ENCODE measurements at regions of chr17 and their contacts with region 1.

Region 1: GRCh38 chr17:38982858-38983746 is 15.9 kb upstream of the FBXO47 start:
- DNase-seq: no peak
- H3K4me3 ChIP-seq: no peak overlapping the region
- CTCF ChIP-seq: peak; percentile 64

Region 2: DNA sequence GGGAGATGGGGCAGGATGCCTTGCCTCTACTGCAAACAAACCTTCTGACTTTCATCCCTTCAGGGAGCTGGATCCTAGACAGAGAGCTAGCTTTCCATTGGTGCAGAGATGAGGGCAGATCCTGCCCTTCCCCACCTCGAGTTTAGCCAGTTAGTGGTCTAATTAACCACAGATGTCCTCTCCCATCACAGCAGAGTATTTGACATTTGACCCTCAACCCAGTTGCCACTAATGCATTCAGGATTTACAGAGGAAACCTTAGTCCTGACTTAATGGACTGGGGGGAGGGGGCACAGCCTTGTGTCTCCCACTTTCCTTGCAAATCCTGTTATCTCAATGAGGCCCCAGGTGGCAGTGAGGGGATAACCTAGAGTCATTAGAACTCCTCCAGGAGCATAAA is 193.9 kb before region 1 on chr17:
- CTCF ChIA-PET with region 1: no interaction called
- POLR2A ChIA-PET with region 1: no interaction called
- DNase-seq: no peak
- H3K4me3 ChIP-seq: no peak overlapping the region
- CTCF ChIP-seq: no peak

Region 3: GRCh38 chr17:38970128-38970527 is 13.0 kb before region 1 on chr17:
- CTCF ChIA-PET with region 1: interaction called, 18 read pairs
- POLR2A ChIA-PET with region 1: interaction called, 3 read pairs
- DNase-seq: no peak
- H3K4me3 ChIP-seq: no peak overlapping the region
- CTCF ChIP-seq: no peak

Region 4: GRCh38 chr17:39000021-39000601 is 17.0 kb after region 1 on chr17:
- CTCF ChIA-PET with region 1: interaction called, 27 read pairs
- POLR2A ChIA-PET with region 1: no interaction called
- DNase-seq: no peak
- H3K4me3 ChIP-seq: no peak overlapping the region
- CTCF ChIP-seq: no peak

Region 5: DNA sequence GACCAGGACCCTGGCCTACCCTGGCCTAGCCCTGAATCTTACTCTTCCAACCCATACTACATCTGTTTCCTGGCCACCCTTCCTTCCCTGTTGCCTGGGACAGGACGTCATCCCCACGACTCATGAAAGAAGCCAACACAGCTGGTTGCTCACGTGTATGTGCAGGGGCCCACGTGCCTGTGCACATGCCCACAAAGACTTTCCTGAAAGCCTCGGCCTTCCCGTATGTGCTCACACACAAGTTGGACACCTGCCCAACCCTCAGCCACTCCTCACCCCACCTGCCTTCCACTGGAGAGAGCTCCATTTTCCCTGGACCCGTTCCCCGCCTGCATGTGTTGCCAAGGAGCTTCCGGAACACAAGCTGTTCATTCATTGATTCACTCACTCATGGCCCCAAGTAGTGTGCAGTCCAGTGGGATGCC is 161.3 kb after region 1 on chr17:
- CTCF ChIA-PET with region 1: interaction called, 382 read pairs
- POLR2A ChIA-PET with region 1: no interaction called
- DNase-seq: no peak
- H3K4me3 ChIP-seq: no peak overlapping the region
- CTCF ChIP-seq: no peak

Region 6: GRCh38 chr17:39164675-39165143 is 181.6 kb after region 1 on chr17:
- CTCF ChIA-PET with region 1: interaction called, 46 read pairs
- POLR2A ChIA-PET with region 1: no interaction called
- DNase-seq: no peak
- H3K4me3 ChIP-seq: peak overlapping the region; percentile 55
- CTCF ChIP-seq: peak; percentile 93

Region 7: GRCh38 chr17:39235555-39236449 is 252.7 kb after region 1 on chr17:
- CTCF ChIA-PET with region 1: interaction called, 21 read pairs
- POLR2A ChIA-PET with region 1: no interaction called
- DNase-seq: no peak
- H3K4me3 ChIP-seq: no peak overlapping the region
- CTCF ChIP-seq: peak; percentile 69

Measured in AG04449 (cell line).